BJ (cell line): ENCODE measurements at regions of chr19 and their contacts with region 1.

Region 1: GRCh38 chr19:42440357-42441048 is 2.2 kb downstream of the CXCL17 start:
- DNase-seq: no peak
- H3K4me3 ChIP-seq: no peak overlapping the region
- H3K27me3 ChIP-seq: peaks cover 6% of the 10 kb centered on the region
- CTCF ChIP-seq: peak; percentile 97

Region 2: GRCh38 chr19:42108527-42109389 is 331.7 kb before region 1 on chr19:
- CTCF ChIA-PET with region 1: interaction called, 11 read pairs
- POLR2A ChIA-PET with region 1: no interaction called
- DNase-seq: no peak
- H3K4me3 ChIP-seq: no peak overlapping the region
- H3K27me3 ChIP-seq: no peaks in the 10 kb centered on the region
- CTCF ChIP-seq: peak; percentile 100

Region 3: GRCh38 chr19:42303101-42303464 is 137.4 kb before region 1 on chr19:
- CTCF ChIA-PET with region 1: no interaction called
- POLR2A ChIA-PET with region 1: no interaction called
- DNase-seq: no peak
- H3K4me3 ChIP-seq: peak overlapping the region; percentile 75
- H3K27me3 ChIP-seq: no peaks in the 10 kb centered on the region
- CTCF ChIP-seq: no peak

Region 4: DNA sequence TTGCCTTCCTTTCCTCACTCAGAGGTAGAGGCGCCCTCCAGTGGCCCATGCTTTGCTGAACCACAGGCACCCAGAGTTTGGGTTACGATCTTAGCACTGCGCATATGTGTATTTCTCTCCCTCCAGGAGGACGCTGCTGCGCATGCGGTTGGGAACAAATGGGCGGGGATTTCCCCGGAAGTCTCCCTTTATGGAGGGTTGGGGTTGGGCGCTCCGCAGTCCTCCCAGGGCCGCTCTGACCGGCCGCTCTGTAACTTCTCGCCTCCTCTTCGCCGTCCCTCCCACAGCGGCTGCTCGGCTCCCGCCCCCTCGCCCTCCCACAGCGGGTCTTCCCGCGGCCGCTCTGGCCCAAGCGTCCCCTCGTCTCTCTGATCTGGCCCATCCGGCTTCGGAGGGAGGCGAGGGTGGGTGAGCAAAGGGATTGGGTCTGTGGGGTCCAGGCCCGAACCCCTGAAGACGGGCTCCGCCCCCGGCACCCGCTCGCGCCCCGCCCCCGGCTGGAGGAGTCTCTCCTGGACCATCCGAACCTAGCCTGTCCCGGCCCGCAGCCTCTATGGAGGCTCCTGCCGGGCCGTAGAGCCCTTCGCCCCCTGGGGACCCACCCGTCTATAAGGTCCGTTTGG is 115.1 kb before region 1 on chr19 and contains the start of gene MEGF8:
- CTCF ChIA-PET with region 1: no interaction called
- POLR2A ChIA-PET with region 1: no interaction called
- DNase-seq: peak; percentile 95
- H3K4me3 ChIP-seq: peak within 1 kb of the TSS; percentile 88
- H3K27me3 ChIP-seq: peaks cover 19% of the 10 kb centered on the region
- CTCF ChIP-seq: peak; percentile 94
- polyA plus RNA-seq, gene MEGF8: 6.8 and 9.6 TPM in 2 replicates

Region 5: DNA sequence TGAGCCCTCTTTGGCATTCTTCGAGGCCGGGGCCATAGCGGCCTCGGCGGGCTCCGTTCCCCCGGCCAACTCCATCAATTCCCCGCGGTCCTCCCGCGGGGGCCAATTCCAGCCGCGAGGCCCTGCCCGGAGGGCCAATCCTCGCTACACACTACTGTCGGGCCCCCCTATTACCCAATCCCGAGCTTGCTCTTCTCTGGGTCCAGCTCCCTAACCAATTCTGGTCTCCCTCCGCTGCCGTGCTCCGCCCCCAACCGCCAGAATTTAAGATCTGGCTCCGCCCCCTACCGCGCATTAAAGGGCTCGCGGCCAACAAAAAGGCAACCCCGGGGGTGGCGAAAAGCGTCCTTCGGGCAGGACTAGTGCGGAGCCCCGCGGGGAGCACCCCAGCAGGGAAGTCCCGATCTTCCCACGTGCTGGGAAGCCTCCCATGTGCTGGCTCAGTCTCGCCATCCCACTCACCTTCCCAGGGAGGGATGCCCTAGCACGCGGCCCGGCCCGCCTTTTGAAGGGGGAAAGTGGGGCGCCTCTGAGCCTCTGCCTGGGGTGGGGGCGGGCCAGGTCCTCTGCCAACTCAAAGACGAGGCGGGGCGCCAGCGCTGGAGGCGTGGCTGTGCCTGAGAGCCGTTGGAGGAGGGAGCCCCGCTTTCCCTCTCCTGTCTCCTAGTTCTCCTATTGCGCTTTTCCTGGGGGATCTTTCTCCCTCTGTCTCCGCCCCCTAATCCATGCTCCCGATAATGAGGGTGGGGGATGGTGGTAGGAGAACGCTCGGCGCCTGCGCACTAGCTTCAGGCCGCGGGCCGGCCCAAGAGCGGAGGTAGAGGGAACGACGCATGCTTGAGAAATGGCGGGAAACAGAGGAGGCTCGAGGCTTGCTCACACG is 16.8 kb before region 1 on chr19:
- CTCF ChIA-PET with region 1: interaction called, 15 read pairs
- POLR2A ChIA-PET with region 1: no interaction called
- DNase-seq: peak; percentile 54
- H3K4me3 ChIP-seq: peak overlapping the region; percentile 62
- H3K27me3 ChIP-seq: no peaks in the 10 kb centered on the region
- CTCF ChIP-seq: no peak

Region 6: GRCh38 chr19:42468273-42468796 is 27.8 kb after region 1 on chr19:
- CTCF ChIA-PET with region 1: interaction called, 22 read pairs
- POLR2A ChIA-PET with region 1: no interaction called
- DNase-seq: peak; percentile 46
- H3K4me3 ChIP-seq: no peak overlapping the region
- H3K27me3 ChIP-seq: no peaks in the 10 kb centered on the region; the same call in 1 of the 2 replicates
- CTCF ChIP-seq: no peak

Region 7: GRCh38 chr19:42529248-42529764 is 88.8 kb after region 1 on chr19:
- CTCF ChIA-PET with region 1: interaction called, 41 read pairs
- POLR2A ChIA-PET with region 1: no interaction called
- DNase-seq: no peak
- H3K4me3 ChIP-seq: no peak overlapping the region
- H3K27me3 ChIP-seq: peaks cover 6% of the 10 kb centered on the region; the same call in 1 of the 2 replicates
- CTCF ChIP-seq: peak; percentile 93

Region 8: GRCh38 chr19:42546831-42547500 is 106.5 kb after region 1 on chr19:
- CTCF ChIA-PET with region 1: no interaction called
- POLR2A ChIA-PET with region 1: no interaction called
- DNase-seq: no peak
- H3K4me3 ChIP-seq: no peak overlapping the region
- H3K27me3 ChIP-seq: peaks cover 23% of the 10 kb centered on the region
- CTCF ChIP-seq: no peak